Heart left ventricle (tissue), 16 donors: ENCODE measurements at regions of chr11 and their contacts with region 1.

Region 1: DNA sequence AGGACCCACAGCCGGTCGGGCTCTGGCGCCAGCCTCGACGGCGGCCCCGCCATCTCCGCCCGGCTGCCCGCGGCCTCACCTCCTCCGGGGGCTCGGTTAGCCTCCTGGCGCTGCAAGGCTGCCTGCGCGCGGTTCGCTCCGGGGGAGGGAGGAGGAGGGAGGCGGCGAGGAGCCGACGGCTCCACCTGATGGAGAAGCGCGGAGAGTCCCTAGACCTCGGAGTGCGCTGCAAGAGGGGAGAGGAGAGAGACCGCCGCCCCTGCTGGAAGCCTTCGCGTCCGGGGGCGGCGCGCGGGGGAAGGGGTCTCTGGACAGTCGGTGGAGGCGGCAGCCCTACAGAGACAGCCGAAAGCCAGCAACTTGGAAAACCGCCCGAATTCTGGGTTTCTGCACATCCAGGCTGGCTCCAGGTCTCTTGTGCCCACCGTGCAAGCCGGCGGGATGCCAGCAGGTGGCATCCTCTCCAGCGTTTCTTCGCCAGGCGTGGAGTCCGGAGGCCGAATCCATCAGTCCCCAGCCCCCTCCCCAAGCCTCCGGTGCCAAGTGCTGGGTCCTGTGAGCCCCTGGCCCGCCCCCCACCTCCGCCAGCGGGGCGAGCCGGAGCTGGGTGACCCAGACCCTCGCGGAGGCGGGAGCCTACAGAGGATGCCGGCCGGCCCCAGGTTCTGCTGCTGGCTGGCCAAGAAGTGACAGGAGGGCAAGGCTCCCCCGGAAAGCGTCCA is 2.9 kb upstream of the KIRREL3 start:
- DNase-seq: no peak
- ATAC-seq: peak in 3 of 4 donors; percentile 22 to 61 (median 56)
- H3K4me3 ChIP-seq: peak overlapping the region in 10 of 12 donors; percentile 5 to 33 (median 18)
- H3K27ac ChIP-seq: no peak overlapping the region
- H3K4me1 ChIP-seq: peaks cover 0 to 21% (median 2%) of the 10 kb centered on the region in 12 donors
- H3K27me3 ChIP-seq: peaks cover 32 to 99% (median 64%) of the 10 kb centered on the region in 9 donors
- CTCF ChIP-seq: peak in 3 of 12 donors; percentile 9 to 27 (median 12)
- POLR2A ChIP-seq: no peak

Region 2: GRCh38 chr11:126930091-126930841 is 73.2 kb before region 1 on chr11:
- intact Hi-C with region 1: no loop called
- DNase-seq: no peak
- ATAC-seq: peak in 1 of 4 donors; percentile 42
- H3K4me3 ChIP-seq: no peak overlapping the region
- H3K27ac ChIP-seq: peak overlapping the region in 1 of 12 donors; percentile 19
- H3K4me1 ChIP-seq: peaks cover 0 to 5% (median 0%) of the 10 kb centered on the region in 12 donors
- H3K27me3 ChIP-seq: peaks cover 0 to 7% (median 0%) of the 10 kb centered on the region in 9 donors
- CTCF ChIP-seq: no peak
- POLR2A ChIP-seq: no peak

Region 3: DNA sequence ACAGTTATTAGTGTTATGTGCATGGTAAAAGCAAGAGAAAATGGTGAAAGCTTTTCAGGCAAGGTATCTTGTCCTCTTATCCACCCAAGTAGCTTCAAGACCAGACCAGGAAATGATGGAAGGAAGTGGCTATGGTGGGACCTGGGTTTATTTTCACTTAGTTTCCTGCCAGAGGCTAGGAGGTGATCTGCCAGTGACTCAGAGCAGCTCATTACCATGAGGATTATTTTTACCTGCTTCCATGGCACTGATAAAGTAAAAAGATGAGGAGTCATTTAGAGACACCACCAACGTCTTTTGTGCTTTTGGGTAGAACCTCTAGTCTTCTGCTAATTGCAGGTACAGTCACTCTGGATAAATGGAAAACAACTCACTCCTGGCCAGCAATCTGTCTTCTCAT is 337.0 kb after region 1 on chr11:
- intact Hi-C with region 1: loop called in 3 of 10 experiments (anchors 5 to 10 kb)
- DNase-seq: no peak
- ATAC-seq: no peak
- H3K4me3 ChIP-seq: no peak overlapping the region
- H3K27ac ChIP-seq: no peak overlapping the region
- H3K4me1 ChIP-seq: no peaks in the 10 kb centered on the region
- H3K27me3 ChIP-seq: peaks cover 0 to 4% (median 0%) of the 10 kb centered on the region in 9 donors
- CTCF ChIP-seq: no peak
- POLR2A ChIP-seq: no peak